Posterior vena cava (tissue), 2 donors: ENCODE measurements at regions of chr17 and their contacts with region 1.

Region 1: GRCh38 chr17:7045909-7046724 is 2.2 kb upstream of the SLC16A11 start:
- DNase-seq: no peak

Region 2: DNA sequence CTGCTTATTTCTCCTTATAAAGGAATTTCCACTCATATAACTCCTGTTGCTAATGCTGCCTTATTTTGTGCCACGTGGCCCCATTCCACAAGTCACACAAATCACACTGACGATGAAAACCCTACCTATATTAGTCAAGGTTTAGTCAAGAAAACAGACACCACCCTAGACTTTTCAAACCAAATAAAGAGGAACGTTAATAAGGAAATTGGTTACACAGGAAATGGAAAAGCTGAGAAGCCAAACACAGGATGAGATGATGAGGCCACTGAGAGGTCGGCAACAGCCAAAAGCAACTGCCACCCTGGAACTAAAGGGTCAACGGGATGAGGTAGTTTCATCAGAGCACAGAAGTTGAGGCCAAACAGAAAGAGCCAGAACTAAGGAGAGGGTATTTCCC is 97.6 kb before region 1 on chr17:
- intact Hi-C with region 1: no loop called
- DNase-seq: no peak

Region 3: DNA sequence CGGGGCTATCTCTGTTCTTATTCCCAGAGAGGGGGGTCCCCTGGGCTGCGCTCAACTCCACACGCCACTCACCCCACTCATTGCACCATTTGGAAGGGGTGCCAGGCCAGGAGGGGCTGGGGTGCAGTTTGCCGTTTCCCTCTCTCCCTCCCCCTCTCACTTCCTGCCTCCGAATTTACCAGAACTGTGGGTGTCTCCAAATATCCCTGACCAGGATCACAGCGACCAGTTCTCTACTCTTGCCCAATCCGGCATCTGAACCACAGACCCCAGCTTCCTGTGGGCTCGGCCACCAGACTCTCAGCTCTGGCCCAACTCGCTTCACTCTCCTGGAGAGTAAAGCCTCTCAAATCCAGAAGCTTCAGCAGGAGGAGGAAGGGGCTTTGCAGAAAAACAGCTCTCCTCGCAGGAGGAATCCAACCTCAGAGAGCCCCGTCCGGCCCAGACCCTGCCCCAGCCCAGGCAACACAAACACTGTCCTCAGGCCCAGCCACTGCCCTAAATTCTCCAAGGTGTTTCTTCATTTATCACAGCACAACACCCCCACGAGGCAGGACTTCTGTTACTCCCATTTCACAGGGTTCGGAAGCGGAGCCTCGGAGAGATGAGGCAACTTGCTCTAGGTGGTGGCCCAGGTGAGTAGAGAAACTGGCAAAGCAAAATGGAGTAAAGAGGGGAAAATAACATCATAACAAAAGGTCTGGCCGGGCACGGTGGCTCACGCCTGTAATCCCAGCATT is 68.9 kb after region 1 on chr17:
- intact Hi-C with region 1: no loop called
- DNase-seq: no peak

Region 4: GRCh38 chr17:7136266-7136877 is 90.3 kb after region 1 on chr17:
- intact Hi-C with region 1: loop called (anchors 5 kb)
- DNase-seq: peak; percentile 93

Region 5: DNA sequence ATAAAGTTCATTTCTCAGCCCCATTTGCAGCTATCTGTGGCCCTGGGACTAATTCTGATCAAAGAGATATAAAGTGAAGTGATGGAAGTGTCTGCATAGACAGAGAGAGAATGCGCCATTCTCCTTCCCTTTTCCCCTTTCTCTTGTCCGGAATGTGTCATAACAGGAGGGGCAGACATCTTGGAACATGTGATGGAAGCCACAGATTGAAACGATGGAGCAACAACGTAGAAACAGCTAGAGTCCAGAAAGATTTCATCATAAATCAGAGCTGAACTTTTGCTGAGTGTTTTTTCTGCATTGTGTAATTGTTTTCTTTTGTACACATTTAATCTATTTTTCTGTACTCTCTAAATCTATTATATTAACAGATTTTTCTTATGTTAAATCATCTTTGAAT is 121.7 kb after region 1 on chr17:
- intact Hi-C with region 1: loop called in 1 of 2 experiments (anchors 10 kb)
- DNase-seq: peak; percentile 11

Region 6: DNA sequence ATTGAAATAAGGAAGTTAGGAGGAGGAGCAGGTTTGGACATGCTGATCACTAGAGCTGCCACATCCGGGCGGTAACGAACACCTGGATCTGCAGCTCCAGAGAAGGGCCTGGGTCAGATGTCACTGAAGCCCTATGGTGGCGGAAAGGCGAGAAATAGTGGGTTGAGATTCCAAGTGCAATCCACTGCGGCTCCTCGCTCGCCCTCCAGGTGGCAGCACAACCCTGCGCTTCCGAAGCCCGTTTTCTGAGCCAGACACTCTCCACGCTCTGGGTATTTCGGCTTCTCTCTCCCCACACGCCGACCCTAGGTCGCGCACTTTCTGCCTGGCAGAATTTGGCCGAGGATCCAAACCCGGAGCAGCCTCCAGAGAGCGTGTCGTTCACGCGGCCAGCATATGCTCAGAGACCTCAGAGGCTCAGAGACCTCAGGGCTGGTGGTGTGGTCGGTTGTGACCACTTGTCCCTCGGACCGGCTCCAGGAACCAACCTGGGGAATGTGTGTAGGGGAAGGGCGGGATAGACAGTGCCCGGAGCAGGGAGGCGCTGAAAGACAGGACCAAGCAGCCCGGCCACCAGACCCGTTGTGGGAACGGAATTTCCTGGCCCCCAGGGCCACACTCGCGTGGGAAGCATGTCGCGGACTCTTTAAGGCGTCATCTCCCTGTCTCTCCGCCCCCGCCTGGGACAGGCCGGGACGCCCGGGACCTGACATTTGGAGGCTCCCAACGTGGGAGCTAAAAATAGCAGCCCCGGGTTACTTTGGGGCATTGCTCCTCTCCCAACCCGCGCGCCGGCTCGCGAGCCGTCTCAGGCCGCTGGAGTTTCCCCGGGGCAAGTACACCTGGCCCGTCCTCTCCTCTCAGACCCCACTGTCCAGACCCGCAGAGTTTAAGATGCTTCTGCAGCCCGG is 234.7 kb after region 1 on chr17:
- intact Hi-C with region 1: loop called in 1 of 2 experiments (anchors 10 kb)
- DNase-seq: peak; percentile 95

Region 7: GRCh38 chr17:8900626-8901585 is 1854.8 kb after region 1 on chr17:
- intact Hi-C with region 1: no loop called
- DNase-seq: no peak